Aorta (tissue), 5 donors: ENCODE measurements at regions of chr17 and their contacts with region 1.

Region 1: GRCh38 chr17:60525685-60526514 is at the start of gene APPBP2:
- DNase-seq: peak; percentile 91 to 96
- ATAC-seq: peak; percentile 97
- H3K4me3 ChIP-seq: peak within 1 kb of the TSS; percentile 86 to 95
- H3K27ac ChIP-seq: peak within 1 kb of the TSS; percentile 47 to 85
- H3K4me1 ChIP-seq: peaks cover 2 to 3% of the 10 kb centered on the region in 2 donors
- H3K27me3 ChIP-seq: no peaks in the 10 kb centered on the region
- total RNA-seq, gene APPBP2: 40.4 to 49.3 TPM

Region 2: DNA sequence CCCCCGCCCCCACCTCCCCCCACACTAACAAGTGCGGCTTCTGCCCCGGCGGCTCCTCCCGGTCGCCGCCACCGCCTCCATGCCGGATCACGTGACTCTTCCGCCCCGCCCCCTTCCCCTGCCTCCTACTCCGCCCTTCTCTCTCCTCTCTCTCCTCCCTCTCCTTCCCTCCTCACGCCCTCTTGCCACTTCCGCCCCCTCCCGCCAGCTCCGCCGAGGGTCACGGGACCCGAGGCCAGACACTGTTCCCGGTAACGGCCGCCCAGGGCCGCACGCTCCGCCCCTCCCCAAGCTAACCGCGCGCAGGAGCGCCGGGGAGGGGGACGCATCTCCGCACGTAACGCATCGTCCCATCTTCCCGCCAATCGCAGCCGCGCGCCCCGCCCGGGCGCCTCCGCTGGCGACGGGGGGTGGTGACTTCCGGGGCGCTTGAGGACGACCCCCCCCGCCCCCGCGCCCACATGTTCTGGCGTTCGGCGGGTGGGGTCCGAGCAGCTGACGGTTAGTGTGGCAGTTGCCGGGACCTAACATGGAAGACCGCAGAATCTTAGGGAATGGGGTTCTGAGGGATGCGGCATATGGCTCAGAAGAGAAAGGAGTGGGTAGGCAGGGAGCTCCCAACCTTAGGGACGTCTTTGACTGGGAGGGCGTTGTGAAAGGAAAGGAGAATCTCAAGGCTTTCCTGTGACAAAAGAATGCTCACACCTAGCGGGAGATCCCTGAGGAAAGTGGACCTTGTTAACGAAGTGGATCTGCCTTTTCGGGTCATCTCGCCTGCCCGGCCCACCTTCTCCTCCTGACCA is 133.7 kb before region 1 on chr17 and contains the start of gene USP32:
- intact Hi-C with region 1: no loop called
- DNase-seq: peak; percentile 100
- ATAC-seq: peak; percentile 100
- H3K4me3 ChIP-seq: peak within 1 kb of the TSS; percentile 43 to 74
- H3K27ac ChIP-seq: peak within 1 kb of the TSS; percentile 37 to 76
- H3K4me1 ChIP-seq: no peaks in the 10 kb centered on the region
- H3K27me3 ChIP-seq: no peaks in the 10 kb centered on the region
- total RNA-seq, gene USP32: 53.7 to 57.7 TPM

Region 3: DNA sequence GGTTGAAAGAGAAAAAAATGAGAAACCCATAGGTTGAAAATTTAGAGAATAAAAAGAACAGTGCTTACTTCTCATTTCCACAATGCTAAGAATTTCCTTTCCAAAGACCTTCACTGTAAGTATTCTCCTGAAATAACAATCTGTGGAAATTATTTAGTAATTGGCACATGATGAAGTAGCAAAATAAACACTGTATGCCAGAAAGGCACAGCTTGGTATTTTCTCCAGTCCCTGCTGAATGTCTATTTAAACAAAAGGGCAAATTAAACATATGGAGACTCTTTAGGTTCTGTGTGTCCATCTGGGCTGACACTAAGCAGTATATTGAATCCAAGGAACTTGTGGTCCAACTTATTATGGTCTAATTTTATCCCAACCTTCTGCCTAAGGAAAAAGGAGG is 57.5 kb before region 1 on chr17:
- intact Hi-C with region 1: loop called in 1 of 2 experiments (anchors 10 kb)
- DNase-seq: no peak
- ATAC-seq: no peak
- H3K4me3 ChIP-seq: no peak overlapping the region
- H3K27ac ChIP-seq: no peak overlapping the region
- H3K4me1 ChIP-seq: peaks cover 0 to 3% of the 10 kb centered on the region in 2 donors
- H3K27me3 ChIP-seq: no peaks in the 10 kb centered on the region

Region 4: DNA sequence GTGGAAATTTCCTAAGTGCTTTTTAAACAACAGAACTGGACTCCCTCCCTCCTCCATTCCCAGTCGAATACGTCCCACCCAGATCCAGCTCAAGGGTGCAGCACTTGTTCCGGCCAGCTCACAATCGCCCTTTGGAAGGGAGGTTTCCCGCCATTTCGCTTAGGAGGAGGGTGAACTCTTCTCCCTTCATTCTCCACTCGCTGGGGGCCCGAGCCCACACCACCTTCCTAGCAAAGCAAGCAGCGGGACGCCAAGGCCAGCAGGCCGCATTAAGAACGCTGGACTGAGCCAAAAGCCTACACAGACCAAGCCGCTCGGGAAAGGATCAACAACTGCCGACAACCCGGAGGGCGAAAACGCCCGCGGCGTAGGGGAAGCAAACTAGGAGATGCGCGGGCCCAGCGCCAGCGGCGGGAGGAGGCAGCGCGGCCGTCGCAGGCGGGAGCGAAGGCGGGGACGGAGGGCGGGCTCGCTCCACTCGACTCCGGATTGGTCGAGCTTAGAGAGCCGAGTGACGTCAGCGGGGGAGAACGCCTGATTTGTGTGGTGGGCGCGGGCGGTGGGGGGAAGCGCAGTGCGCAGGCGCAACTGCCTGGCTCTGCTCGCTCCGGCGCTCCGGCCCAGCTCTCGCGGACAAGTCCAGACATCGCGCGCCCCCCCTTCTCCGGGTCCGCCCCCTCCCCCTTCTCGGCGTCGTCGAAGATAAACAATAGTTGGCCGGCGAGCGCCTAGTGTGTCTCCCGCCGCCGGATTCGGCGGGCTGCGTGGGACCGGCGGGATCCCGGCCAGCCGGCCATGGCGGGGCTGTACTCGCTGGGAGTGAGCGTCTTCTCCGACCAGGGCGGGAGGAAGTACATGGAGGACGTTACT is 74.0 kb after region 1 on chr17 and contains the start of gene PPM1D:
- intact Hi-C with region 1: loop called in 1 of 2 experiments (anchors 10 kb)
- DNase-seq: peak; percentile 100
- ATAC-seq: peak; percentile 98
- H3K4me3 ChIP-seq: peak within 1 kb of the TSS; percentile 55 to 91
- H3K27ac ChIP-seq: peak within 1 kb of the TSS; percentile 82 to 91
- H3K4me1 ChIP-seq: no peaks in the 10 kb centered on the region
- H3K27me3 ChIP-seq: no peaks in the 10 kb centered on the region
- total RNA-seq, gene PPM1D: 15.8 to 16.0 TPM